Panc1 (cell line): ENCODE measurements at regions of chr14 and their contacts with region 1.

Region 1: DNA sequence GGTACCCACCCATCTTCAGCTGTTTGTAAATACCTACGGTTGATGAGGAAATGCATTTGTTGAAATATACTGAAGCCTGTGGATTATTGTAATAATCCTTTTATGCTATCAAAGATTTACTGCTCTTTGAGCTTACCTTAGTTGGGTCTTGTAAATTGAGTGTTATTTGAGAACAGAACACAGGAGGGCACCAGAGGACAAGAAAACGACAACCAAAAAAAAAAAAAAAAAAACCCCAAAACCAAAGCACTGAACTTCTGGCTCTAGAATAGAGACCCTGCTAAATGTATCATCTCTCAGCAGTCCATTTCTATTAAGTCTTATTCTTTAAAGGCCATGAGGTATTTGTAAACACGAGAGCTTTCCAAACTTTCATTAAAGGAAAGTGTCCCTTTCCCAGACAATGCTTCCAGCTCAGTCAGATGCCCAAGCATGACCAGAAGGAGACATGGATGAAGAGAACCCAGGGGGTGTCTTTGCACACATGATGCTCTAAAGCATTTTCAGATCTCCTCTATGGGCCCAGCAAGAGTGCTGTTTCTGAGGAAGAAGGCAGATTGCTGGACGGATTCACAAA is 763.9 kb downstream of the NRXN3 start:
- DNase-seq: no peak
- ATAC-seq: no peak
- H3K4me3 ChIP-seq: no peak overlapping the region
- H3K27ac ChIP-seq: no peak overlapping the region
- H3K4me1 ChIP-seq: no peaks in the 10 kb centered on the region
- H3K27me3 ChIP-seq: no peaks in the 10 kb centered on the region
- CTCF ChIP-seq: peak; percentile 53; the same call in 1 of the 2 replicates

Region 2: GRCh38 chr14:77760381-77761246 is 1173.4 kb before region 1 on chr14 and contains the start of gene SNW1:
- CTCF ChIA-PET with region 1: interaction called, 12 read pairs
- POLR2A ChIA-PET with region 1: no interaction called
- in situ Hi-C with region 1: no loop called
- intact Hi-C with region 1: no loop called
- DNase-seq: peak; percentile 79
- ATAC-seq: peak; percentile 97
- H3K4me3 ChIP-seq: peak within 1 kb of the TSS; percentile 71 to 94
- H3K27ac ChIP-seq: peak within 1 kb of the TSS; percentile 95
- H3K4me1 ChIP-seq: peaks cover 4% of the 10 kb centered on the region; the same call in 1 of the 2 replicates
- H3K27me3 ChIP-seq: no peaks in the 10 kb centered on the region
- CTCF ChIP-seq: no peak
- total RNA-seq, gene SNW1: 67.0 TPM

Region 3: GRCh38 chr14:78848234-78848820 is 85.7 kb before region 1 on chr14:
- CTCF ChIA-PET with region 1: no interaction called
- POLR2A ChIA-PET with region 1: no interaction called
- in situ Hi-C with region 1: no loop called
- intact Hi-C with region 1: no loop called
- DNase-seq: peak; percentile 22
- ATAC-seq: no peak
- H3K4me3 ChIP-seq: no peak overlapping the region
- H3K27ac ChIP-seq: no peak overlapping the region
- H3K4me1 ChIP-seq: no peaks in the 10 kb centered on the region
- H3K27me3 ChIP-seq: no peaks in the 10 kb centered on the region
- CTCF ChIP-seq: peak; percentile 81

Region 4: GRCh38 chr14:78921856-78922255 is 12.2 kb before region 1 on chr14:
- CTCF ChIA-PET with region 1: interaction called, 10 read pairs
- POLR2A ChIA-PET with region 1: no interaction called
- in situ Hi-C with region 1: no loop called
- intact Hi-C with region 1: no loop called
- DNase-seq: no peak
- ATAC-seq: no peak
- H3K4me3 ChIP-seq: no peak overlapping the region
- H3K27ac ChIP-seq: no peak overlapping the region
- H3K4me1 ChIP-seq: no peaks in the 10 kb centered on the region
- H3K27me3 ChIP-seq: no peaks in the 10 kb centered on the region
- CTCF ChIP-seq: no peak

Region 5: GRCh38 chr14:79144896-79145295 is 210.9 kb after region 1 on chr14:
- CTCF ChIA-PET with region 1: no interaction called
- POLR2A ChIA-PET with region 1: no interaction called
- in situ Hi-C with region 1: no loop called
- intact Hi-C with region 1: no loop called
- DNase-seq: no peak
- ATAC-seq: no peak
- H3K4me3 ChIP-seq: no peak overlapping the region
- H3K27ac ChIP-seq: no peak overlapping the region
- H3K4me1 ChIP-seq: no peaks in the 10 kb centered on the region
- H3K27me3 ChIP-seq: no peaks in the 10 kb centered on the region
- CTCF ChIP-seq: no peak

Region 6: GRCh38 chr14:79324788-79325467 is 390.9 kb after region 1 on chr14:
- CTCF ChIA-PET with region 1: interaction called, 20 read pairs
- POLR2A ChIA-PET with region 1: no interaction called
- in situ Hi-C with region 1: no loop called
- intact Hi-C with region 1: no loop called
- DNase-seq: no peak
- ATAC-seq: no peak
- H3K4me3 ChIP-seq: no peak overlapping the region
- H3K27ac ChIP-seq: no peak overlapping the region
- H3K4me1 ChIP-seq: no peaks in the 10 kb centered on the region
- H3K27me3 ChIP-seq: no peaks in the 10 kb centered on the region
- CTCF ChIP-seq: no peak

Region 7: GRCh38 chr14:79668951-79669350 is 734.9 kb after region 1 on chr14:
- CTCF ChIA-PET with region 1: interaction called, 10 read pairs
- POLR2A ChIA-PET with region 1: no interaction called
- in situ Hi-C with region 1: no loop called
- intact Hi-C with region 1: no loop called
- DNase-seq: no peak
- ATAC-seq: no peak
- H3K4me3 ChIP-seq: no peak overlapping the region
- H3K27ac ChIP-seq: no peak overlapping the region
- H3K4me1 ChIP-seq: no peaks in the 10 kb centered on the region
- H3K27me3 ChIP-seq: no peaks in the 10 kb centered on the region
- CTCF ChIP-seq: no peak

Region 8: DNA sequence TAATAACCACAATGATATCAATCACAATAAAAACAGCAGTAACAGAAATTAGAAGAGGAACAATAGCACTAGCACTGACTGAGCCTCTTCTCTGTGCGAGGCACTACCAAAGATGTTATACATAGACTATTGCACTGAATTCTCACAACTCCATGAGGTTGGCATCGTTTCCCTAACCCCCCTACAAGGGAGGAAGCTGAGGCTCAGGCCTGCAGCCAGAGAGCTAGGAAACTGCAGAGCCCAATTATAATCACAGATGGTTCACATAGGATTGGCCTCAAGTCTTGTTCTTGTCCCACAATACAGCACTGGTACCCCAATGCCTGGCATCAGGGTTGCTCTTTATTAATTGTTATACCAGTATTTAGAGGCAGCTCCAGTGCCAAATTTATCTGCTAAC is 1729.5 kb after region 1 on chr14:
- CTCF ChIA-PET with region 1: interaction called, 16 read pairs
- POLR2A ChIA-PET with region 1: no interaction called
- in situ Hi-C with region 1: no loop called
- intact Hi-C with region 1: no loop called
- DNase-seq: no peak
- ATAC-seq: no peak
- H3K4me3 ChIP-seq: no peak overlapping the region
- H3K27ac ChIP-seq: no peak overlapping the region
- H3K4me1 ChIP-seq: no peaks in the 10 kb centered on the region
- H3K27me3 ChIP-seq: no peaks in the 10 kb centered on the region
- CTCF ChIP-seq: no peak